ENCODE measurements at regions of chr6 and their contacts with region 1.

Region 1: GRCh38 chr6:155174576-155175211 is 89.1 kb upstream of the CLDN20 start:
- DNase-seq: no peak
- ATAC-seq: peak; percentile 85

Region 2: DNA sequence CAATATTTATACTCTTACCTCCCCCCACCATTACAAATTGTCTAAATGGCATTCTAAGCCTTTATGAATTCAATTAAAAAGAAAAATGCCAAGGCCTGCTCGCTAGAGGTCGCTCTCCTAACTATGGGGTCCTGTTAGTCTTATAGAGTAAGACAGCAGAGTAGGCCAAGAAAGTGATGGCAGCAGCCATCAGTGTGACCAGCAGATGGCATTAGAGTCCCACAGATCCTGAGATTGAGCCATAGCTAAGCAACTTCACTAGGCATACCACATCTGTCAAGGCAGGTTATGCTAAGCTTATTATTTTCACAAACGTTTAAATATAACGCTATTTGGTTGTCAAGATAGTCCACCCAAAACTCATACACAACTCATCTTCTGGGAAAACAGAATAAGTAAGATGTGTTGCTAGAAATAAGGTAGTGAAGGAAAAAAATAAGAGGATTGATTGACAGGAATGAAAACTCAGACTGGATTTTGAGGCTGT is 499.0 kb before region 1 on chr6:
- intact Hi-C with region 1: loop called (anchors 5 kb)
- DNase-seq: peak; percentile 86
- ATAC-seq: peak; percentile 99

Region 3: GRCh38 chr6:154852687-154853086 is 322.0 kb before region 1 on chr6:
- intact Hi-C with region 1: no loop called
- DNase-seq: no peak
- ATAC-seq: no peak

Region 4: GRCh38 chr6:154868143-154868594 is 306.5 kb before region 1 on chr6:
- intact Hi-C with region 1: loop called (anchors 2 kb)
- DNase-seq: no peak
- ATAC-seq: peak; percentile 55

Region 5: DNA sequence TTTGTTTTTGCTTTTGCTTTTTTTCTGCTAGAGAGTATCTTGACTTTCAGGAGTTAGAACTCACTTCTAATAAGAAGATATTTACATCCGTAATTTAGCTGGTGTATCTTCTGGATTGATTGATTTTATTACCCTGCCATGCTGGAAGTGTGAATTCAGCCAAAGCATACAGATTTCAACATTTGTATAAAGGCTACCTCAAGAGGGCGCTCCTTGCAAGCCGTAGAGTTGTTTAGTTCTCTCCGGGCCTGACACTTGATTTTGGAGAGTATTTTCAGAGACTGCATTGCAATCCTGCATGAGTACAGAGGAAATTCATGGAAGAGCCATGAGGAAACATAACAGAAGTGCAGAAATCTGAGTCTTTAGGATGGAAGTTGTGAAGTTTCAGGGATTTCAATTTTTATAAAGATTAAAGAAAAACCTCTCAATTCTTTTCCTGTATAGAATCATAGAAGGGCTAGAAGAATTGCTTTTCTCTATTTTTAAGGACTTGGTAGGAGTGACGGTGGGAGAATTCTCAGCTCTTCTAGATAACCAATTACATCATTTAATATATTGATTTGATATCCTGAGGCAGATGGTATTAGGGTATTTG is 246.3 kb before region 1 on chr6:
- intact Hi-C with region 1: loop called (anchors 5 kb)
- DNase-seq: no peak
- ATAC-seq: peak; percentile 58

Region 6: DNA sequence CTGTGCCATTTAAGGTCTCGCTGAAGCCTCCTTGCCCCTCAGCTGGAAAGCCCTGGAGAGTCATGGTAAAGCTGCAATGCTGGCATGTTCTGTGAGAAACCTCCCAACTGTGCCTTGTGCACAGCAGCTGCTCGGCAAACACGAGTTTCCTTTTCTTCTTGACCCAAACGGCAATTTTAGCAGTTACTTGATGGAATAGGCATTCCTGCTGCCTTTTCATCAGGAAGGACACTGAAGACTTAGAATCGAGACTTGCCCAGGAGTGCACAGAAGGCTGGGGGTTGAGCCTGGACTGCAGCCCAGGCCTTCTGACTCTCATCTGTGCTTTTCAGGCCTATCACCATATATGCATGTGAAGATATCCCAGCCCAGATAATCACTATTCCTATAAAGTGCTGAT is 60.4 kb after region 1 on chr6:
- intact Hi-C with region 1: no loop called
- DNase-seq: no peak
- ATAC-seq: no peak